ENCODE measurements at regions of chr9 and their contacts with region 1.

Region 1: DNA sequence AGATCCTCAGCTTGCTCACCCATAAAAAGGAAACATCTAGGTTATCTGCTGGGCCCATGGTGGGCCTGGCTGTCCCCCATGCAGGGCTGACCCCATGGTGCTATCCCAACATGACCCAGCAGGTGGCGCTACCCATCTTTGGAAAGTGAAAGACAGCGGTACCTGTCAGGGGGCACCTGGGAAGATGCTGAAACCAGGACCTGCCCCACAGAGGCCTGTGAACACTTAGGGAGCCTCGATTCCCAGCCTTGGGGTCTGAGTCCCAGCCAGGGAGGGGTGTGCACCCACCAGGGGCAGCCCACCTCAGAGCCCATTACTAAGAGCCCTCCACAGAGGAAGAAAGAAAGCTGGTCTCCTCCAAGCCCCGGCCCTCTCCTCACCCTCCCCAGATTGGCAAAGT is 46.6 kb upstream of the IPPK start:
- DNase-seq: no peak
- ATAC-seq: peak; percentile 52

Region 2: DNA sequence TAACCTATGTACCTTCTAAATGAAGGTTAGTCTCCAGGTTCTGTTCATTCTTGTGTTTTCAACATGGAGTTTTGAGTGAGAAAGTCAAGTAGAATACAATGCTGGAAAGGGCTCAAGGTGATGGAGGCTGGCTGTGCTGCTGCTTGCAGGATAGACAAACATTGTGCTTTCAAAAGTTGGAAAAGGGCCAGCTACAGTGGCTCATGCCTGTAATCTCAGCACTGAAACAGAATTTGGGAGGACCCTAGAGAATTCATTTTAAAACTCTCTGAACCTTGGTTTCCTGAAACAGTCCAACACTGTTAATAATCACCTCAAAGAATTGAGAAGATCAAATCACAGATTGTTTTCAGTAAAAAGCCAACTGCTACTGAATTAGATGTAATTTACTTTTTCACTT is 407.7 kb before region 1 on chr9:
- intact Hi-C with region 1: no loop called
- DNase-seq: no peak
- ATAC-seq: no peak

Region 3: DNA sequence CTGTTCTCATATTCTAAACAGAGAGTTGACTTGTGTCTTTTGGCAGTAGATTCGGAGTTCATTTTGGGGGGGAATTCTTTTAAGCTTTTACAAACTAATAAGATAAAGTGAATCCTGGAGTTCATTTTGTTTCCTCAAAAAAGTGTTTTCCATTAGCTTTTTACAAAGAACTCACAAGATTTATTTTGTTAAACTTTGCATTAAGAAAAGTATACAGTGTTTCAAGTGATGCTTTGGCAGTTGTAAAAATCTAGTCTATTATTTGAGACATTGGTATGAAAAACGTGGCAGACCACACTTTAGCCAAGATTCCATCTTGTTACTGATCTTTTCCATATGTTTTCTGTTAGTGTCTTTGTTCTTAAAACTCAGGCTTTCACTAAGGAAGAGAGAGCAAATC is 291.1 kb before region 1 on chr9:
- intact Hi-C with region 1: no loop called
- DNase-seq: no peak
- ATAC-seq: no peak

Region 4: GRCh38 chr9:92669890-92670708 is 46.5 kb before region 1 on chr9 and contains the start of gene IPPK:
- intact Hi-C with region 1: loop called (anchors 2 kb)
- DNase-seq: peak; percentile 100
- ATAC-seq: peak; percentile 96
- total RNA-seq, gene IPPK: 5.9 TPM

Region 5: DNA sequence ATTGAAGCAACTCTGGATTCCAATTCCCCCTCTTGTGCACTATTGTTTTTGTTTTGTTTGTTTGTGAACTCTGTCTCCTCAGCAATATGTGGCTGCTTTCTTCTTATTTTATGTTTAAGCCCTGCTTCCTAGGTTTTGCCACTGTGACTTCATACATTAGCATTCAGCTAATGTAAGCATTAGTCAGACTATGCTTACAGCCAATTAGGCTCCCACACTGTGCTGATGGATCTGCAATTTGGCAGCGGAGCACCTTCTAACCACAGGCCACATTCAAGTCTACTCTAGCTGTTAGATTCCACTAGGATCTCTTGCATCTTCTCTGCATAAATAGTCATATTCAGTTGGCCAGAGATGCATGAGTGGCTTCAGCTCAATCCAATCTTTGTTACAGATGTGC is 57.7 kb after region 1 on chr9:
- intact Hi-C with region 1: no loop called
- DNase-seq: no peak
- ATAC-seq: no peak

Region 6: DNA sequence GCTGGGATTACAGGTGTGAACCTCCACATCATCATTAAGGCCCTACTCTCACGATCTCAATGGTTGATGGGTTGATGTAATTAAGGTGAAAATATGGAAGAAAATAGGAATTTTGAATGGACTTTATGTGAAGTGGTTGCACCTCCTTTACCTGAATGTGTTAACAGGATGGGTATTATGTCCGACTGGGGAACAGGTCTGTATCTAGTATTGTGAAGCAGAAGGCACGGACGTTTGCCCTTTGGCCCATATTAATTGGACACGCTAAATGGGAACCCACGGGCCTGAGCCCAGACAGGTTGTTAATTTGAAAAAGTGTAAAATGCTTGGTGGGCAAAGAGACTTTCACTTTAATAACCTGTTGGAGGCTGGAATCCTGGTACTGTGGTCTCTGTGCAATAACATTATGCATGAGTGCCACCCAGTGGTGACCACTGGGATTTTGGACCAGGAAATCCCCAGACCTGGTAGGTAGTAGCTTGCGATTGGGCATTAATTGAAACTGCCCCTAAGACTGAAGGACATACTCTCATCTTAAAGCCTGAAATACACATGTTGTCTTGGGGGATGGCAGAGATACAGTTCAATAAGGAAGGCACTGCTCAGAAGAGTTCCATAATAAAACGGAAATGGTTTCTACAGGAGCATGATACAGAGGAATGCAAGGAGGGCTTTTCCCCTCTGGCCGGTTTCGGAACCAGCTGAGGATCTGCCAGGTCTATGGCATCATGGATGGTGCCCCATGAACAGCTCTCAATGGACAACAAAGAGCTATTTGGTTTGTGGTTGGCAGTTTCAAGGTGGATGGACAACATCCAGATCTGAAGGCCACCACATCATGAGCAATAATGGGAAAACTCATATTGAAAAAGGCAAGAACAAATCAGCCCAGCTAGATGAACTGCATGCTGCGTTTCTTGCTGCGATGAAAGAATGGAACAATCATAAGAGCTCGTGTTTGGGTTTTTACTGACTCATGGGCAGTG is 74.3 kb after region 1 on chr9:
- intact Hi-C with region 1: loop called (anchors 1 kb)
- DNase-seq: peak; percentile 72
- ATAC-seq: peak; percentile 94

Measured in Right ventricle myocardium inferior (tissue), 1 donor.